AG04449 (cell line): ENCODE measurements at regions of chr12 and their contacts with region 1.

Region 1: GRCh38 chr12:55728939-55729823 is at the start of gene CD63:
- DNase-seq: no peak
- H3K4me3 ChIP-seq: peak within 1 kb of the TSS; percentile 88
- CTCF ChIP-seq: no peak

Region 2: DNA sequence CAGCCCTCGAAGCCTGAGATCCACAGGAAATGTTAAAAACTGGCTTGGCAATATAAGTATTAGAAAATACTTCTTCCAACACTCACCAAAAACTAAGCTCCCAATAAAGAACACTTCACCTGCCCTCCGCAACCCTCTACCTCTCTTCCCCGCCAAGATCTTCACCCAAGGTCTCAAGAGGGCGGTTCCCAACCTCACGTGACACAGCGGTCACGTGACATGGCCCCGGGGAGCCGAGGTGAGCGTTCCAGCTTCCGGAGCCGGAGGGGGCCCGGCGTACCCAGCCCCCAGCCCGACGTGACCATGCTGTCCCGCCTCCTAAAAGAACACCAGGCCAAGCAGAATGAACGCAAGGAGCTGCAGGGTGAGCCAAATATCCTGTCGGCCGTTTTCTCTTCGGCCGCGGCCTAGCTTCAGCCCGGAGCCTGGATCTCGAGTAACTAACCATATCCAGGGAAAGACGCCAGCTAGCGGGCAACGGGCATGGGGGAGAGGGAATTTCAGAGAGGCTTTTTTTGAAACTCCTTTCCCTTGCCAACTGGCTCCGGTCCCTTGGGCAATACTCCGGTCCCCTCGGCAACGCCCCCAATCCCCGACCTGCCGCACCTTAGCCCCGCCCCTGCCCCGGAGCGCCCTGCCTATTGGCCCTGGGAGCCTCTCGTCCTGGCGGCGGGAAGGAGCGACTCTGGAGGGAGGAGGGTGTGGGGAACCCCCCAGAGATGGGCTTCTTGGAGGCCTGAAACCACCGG is 13.2 kb before region 1 on chr12 and contains the start of gene BLOC1S1:
- CTCF ChIA-PET with region 1: interaction called, 79 read pairs
- POLR2A ChIA-PET with region 1: interaction called, 39 read pairs
- DNase-seq: no peak
- H3K4me3 ChIP-seq: peak within 1 kb of the TSS; percentile 81
- CTCF ChIP-seq: no peak

Region 3: GRCh38 chr12:55861871-55862270 is 132.7 kb after region 1 on chr12:
- CTCF ChIA-PET with region 1: no interaction called
- POLR2A ChIA-PET with region 1: no interaction called
- DNase-seq: no peak
- H3K4me3 ChIP-seq: no peak overlapping the region
- CTCF ChIP-seq: no peak

Region 4: DNA sequence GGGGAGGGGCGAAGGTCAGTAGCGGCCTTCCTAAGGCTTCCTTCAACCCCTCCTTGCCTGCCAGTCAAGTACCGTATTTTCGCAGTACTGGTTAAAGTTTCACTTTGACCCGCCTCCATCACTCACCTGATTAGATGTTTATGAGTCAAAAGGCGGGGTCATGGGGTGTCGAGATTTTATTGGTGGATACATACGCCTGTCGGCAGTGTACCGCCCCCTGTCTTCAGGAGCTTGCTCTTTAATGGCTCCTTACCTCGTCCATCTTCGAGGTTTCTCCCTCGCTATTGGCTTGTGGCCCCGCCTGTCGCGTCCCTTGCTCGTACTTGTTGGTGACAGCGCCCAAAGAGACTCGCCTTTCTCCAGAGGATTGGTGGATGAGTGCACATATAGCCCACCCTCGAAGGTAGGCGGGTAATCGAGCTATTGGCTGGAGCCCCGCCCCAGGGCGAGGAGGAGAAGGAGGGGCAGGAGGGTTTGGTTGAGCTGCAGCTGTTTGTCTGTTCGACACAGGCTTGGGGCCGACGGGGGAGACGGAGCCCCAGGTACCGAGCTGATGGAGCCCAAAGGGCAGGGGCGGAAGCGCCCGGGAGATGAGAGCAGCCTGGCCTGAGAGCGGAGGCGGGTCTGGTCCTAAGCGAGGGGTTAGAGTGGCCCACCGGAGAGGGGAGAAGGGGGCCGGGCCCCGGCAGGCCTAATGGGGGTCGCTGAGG is 244.6 kb after region 1 on chr12 and contains the start of gene RAB5B:
- CTCF ChIA-PET with region 1: interaction called, 3 read pairs
- POLR2A ChIA-PET with region 1: interaction called, 10 read pairs
- DNase-seq: peak; percentile 100
- H3K4me3 ChIP-seq: peak within 1 kb of the TSS; percentile 97
- CTCF ChIP-seq: no peak